Testis (tissue), 5 donors: ENCODE measurements at regions of chr7 and their contacts with region 1.

Region 1: GRCh38 chr7:45923290-45923689 is 2.2 kb upstream of the IGFBP3 start:
- DNase-seq: peak; percentile 88
- H3K4me3 ChIP-seq: no peak overlapping the region
- H3K27ac ChIP-seq: no peak overlapping the region
- H3K4me1 ChIP-seq: peaks cover 5% of the 10 kb centered on the region
- H3K27me3 ChIP-seq: no peaks in the 10 kb centered on the region
- CTCF ChIP-seq: peak; percentile 79 to 90 (median 80)
- POLR2A ChIP-seq: no peak

Region 2: DNA sequence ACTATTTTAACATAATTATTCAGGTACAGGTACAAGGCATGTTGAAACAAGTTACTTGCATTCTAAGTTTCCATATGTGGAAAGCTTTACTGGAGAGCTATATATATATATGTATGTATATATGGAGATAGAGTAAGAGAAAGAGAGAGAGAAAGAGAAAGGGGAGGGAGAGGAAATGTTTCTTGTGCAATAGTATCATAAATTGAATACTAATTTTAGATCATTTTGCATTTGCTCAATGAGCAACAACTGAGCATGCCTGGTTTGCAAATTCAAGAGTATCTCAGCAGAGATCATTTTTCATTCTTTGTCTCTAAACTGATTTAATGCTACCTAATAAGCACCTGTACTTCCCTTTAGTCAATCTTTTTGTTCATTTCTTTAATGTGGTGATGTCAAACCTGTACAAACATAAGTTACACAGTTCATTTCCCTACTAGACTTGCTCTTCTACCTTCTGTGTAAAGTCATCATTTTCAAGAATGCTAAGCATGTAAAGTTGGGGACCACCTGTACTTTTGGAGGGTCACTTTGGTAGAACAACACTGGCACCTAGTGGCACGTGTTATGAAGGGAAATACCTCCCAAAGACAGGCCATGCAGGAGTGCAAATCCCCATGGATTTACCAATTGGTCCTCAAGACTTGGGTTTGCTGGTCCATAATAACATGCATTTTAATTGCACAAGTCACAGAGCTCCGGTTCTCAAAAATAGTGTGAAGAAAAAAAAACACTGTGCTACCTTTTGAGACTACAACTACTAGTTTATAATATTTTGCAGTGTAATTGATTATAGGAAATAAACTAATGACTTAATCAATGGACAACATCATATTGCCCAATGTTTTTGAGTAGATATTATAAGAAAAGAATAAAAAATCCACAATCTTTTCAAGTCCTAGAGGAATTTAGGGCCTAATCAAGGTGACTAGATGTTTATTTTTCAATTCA is 429.0 kb after region 1 on chr7:
- intact Hi-C with region 1: loop called (anchors 10 kb)
- DNase-seq: peak; percentile 59
- H3K4me3 ChIP-seq: no peak overlapping the region
- H3K27ac ChIP-seq: no peak overlapping the region
- H3K4me1 ChIP-seq: no peaks in the 10 kb centered on the region
- H3K27me3 ChIP-seq: no peaks in the 10 kb centered on the region
- CTCF ChIP-seq: peak; percentile 44 to 56 (median 54)
- POLR2A ChIP-seq: no peak

Region 3: DNA sequence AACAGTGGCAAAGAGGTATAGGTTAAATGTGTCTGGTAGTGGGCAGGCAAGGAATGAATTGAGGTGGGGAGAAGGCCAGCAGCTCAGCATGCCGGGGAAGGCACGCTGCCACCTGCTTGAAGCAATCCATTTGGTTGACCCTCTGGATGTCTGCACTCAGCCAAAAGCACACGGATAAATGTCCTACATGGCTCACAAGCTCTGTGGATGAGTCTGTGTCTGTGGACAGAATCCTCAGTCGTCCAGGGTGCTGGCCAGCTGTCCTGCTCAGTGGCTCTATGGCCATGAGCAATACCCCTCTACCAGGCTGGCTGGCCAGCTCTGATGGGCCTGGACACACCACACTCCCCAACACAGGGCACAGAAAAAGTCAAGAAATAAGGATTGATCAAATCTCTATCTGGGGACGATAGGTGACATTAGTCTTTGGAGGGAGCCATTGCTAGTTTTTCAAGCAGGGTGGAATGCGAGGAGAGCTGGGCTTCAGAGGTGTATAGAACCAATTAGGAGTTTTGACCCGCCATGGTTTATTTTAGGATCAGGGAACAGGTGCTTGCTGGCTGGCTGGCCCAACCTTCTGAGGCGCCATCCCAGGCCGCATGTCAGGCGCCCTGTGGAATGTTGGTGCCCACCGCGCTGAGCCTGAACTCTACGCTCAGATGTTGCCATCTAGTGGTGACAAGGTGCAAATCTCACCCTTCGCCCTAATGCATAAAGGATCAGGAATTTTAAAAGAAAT is 1165.2 kb after region 1 on chr7:
- intact Hi-C with region 1: loop called (anchors 5 kb)
- DNase-seq: peak; percentile 74
- H3K4me3 ChIP-seq: no peak overlapping the region
- H3K27ac ChIP-seq: no peak overlapping the region
- H3K4me1 ChIP-seq: no peaks in the 10 kb centered on the region
- H3K27me3 ChIP-seq: no peaks in the 10 kb centered on the region
- CTCF ChIP-seq: peak; percentile 84 to 90 (median 89)
- POLR2A ChIP-seq: no peak